Astrocyte of the cerebellum (primary cell): ENCODE measurements at regions of chr5 and their contacts with region 1.

Region 1: GRCh38 chr5:99169309-99169708 is 240.5 kb upstream of the CHD1 start:
- DNase-seq: peak; percentile 28
- H3K4me3 ChIP-seq: no peak overlapping the region
- CTCF ChIP-seq: peak; percentile 46

Region 2: GRCh38 chr5:98786191-98786853 is 383.0 kb before region 1 on chr5:
- in situ Hi-C with region 1: no loop called
- DNase-seq: no peak
- H3K4me3 ChIP-seq: no peak overlapping the region
- CTCF ChIP-seq: no peak

Region 3: DNA sequence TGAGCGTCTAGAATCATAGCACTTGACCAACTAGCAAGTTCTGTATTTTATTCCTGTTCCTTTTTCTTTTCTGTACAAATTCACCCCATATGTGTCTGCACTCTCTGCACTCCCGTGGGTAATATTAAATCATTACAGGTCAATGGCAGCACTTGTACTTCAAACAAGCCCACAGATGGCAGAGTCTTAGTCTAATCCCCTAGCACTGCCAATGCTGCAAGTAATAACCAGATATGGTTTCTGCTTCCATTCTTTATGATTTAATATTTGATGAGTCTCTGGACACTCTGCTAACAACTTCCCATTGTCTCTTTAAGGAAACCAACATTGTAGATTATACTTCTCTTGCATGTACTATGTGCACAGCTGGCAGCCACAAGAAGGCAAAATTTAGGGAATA is 103.3 kb after region 1 on chr5:
- in situ Hi-C with region 1: loop called (anchors 25 kb)
- DNase-seq: no peak
- H3K4me3 ChIP-seq: no peak overlapping the region
- CTCF ChIP-seq: no peak